HEK293 (cell line): ENCODE measurements at regions of chr7 and their contacts with region 1.

Region 1: GRCh38 chr7:123797673-123798527 is 47.1 kb upstream of the HYAL4 start:
- H3K4me3 ChIP-seq: no peak overlapping the region
- H3K27ac ChIP-seq: peak overlapping the region; percentile 19; the same call in 1 of the 2 replicates
- H3K4me1 ChIP-seq: peaks cover 13% of the 10 kb centered on the region; the same call in 1 of the 2 replicates
- CTCF ChIP-seq: no peak

Region 2: GRCh38 chr7:123748734-123749536 is 49.0 kb before region 1 on chr7 and contains the start of gene WASL:
- CTCF ChIA-PET with region 1: interaction called, 7 read pairs
- POLR2A ChIA-PET with region 1: interaction called, 14 read pairs
- H3K4me3 ChIP-seq: peak within 1 kb of the TSS; percentile 92
- H3K27ac ChIP-seq: peak within 1 kb of the TSS; percentile 97
- H3K4me1 ChIP-seq: peaks cover 18% of the 10 kb centered on the region
- CTCF ChIP-seq: no peak

Region 3: GRCh38 chr7:123787220-123788007 is 10.5 kb before region 1 on chr7:
- CTCF ChIA-PET with region 1: interaction called, 10 read pairs
- POLR2A ChIA-PET with region 1: no interaction called
- H3K4me3 ChIP-seq: no peak overlapping the region
- H3K27ac ChIP-seq: no peak overlapping the region
- H3K4me1 ChIP-seq: no peaks in the 10 kb centered on the region
- CTCF ChIP-seq: no peak

Region 4: GRCh38 chr7:123923599-123923998 is 125.7 kb after region 1 on chr7:
- CTCF ChIA-PET with region 1: no interaction called
- POLR2A ChIA-PET with region 1: no interaction called
- H3K4me3 ChIP-seq: no peak overlapping the region
- H3K27ac ChIP-seq: no peak overlapping the region
- H3K4me1 ChIP-seq: no peaks in the 10 kb centered on the region
- CTCF ChIP-seq: no peak

Region 5: GRCh38 chr7:125695626-125696025 is 1897.7 kb after region 1 on chr7:
- CTCF ChIA-PET with region 1: no interaction called
- POLR2A ChIA-PET with region 1: no interaction called
- H3K4me3 ChIP-seq: no peak overlapping the region
- H3K27ac ChIP-seq: no peak overlapping the region
- H3K4me1 ChIP-seq: no peaks in the 10 kb centered on the region
- CTCF ChIP-seq: no peak